ENCODE measurements at regions of chr6 and their contacts with region 1.

Region 1: DNA sequence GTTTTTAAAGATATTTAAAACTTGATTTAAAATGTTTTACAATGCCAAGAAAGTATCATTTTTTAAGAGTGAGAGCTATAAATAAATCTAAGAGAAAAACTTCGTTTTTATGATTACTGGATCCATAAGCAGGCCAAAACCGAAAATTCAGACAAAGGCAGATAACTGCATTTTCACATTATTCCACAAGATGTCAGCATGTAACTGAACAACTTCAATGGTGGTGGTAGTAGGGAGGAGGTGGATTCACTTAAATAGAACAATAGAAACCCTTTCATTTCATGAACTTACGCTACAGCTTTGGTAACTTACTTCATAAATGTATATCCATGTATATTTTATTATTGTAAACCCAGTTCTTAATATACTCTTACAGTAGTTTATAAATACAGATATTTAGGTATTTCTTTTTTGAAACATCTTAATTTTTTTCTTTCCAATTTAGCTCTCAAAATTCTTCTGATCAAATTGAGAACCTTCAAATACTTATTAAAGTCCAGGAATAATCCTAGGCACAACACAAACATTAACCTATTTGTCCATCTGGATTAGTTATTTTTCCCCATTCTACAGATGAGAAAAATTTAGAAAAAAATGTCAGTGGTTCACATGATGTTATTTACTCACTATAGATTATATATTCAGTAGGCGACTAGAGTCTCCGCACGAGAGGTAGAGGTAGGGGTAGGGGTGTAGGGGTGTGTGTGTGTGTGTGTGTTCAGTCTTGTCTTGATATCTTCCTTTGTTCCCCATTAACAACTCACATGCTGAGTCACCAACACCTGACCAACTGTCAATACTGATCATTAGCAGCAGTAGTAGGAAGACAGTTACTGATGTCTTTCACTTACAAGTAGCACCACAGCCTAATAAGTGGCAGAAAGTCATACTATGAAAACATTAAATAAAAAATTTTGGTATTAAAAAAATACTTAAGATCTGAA is 111.5 kb downstream of the ARHGAP18 start:
- DNase-seq: peak; percentile 88

Region 2: DNA sequence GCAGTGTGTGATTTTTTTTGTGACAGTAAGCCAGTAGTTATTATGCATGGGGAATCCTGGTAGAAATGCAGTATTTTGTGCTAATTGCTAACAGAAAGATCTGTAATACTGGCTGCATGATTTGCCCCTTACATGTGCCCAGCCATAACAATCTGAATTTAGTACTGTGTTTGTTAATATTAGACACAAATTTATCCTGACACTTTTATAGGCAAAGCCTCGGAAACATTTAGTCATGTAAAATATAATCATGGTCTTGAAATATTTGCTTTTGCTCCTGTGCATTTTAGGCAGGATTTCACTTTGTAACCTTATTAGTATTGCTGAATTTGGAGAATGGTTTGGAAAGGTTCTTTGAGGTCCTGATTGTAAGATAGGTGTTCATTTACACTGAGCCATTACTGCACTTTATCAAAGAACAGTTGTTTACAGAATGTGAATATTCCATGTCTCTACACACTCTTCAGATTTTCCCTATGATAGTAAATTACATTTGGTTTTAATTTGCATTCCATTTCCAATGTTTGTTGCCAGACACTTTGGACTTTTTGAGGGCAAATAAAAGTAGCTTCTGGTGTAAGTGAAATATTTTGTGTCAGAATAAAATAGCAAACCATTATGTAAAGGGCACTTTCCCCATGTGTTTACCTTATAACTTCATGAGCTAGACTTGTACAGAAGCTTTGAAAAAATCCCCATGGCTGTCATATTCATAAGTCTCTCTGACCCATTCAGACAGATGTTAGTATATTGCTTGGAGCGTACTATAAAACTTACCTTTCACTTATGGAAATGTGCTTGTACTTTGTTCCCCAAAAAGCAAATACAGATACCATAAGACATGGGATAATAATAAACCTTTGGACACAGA is 238.5 kb before region 1 on chr6:
- in situ Hi-C with region 1: no loop called
- DNase-seq: no peak

Region 3: DNA sequence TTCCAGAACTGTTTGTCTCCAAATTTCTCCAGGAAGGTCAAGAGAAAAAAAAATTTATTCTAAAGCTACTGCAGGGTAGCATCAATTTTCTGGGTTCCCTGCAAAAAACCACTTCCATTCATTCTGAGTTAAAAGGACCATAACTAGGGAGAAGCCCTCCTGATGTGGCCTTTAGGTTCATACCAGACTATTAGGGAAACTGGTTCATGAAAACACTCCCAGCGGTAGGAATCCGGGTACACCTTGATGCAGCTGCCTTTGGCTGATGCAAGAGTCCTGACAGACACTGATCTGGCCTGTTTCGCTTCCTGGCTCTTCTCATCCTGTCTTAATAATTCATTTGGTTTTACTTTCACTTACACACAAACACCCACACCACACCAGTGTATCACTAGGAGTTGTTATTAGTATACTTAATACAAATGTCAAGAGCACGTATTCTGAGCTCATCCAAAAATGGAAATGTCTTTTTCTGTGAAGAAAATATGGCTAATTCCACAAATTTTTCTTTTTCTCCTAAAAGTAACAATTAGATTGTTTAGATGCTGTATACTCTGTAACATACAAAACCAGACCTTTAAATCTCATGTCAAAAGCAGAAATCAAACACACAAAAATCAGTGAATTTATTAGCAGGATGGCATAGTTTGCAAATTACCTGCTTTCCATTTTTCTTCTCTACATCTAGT is 149.8 kb after region 1 on chr6:
- in situ Hi-C with region 1: loop called (anchors 10 kb)
- DNase-seq: no peak

Region 4: DNA sequence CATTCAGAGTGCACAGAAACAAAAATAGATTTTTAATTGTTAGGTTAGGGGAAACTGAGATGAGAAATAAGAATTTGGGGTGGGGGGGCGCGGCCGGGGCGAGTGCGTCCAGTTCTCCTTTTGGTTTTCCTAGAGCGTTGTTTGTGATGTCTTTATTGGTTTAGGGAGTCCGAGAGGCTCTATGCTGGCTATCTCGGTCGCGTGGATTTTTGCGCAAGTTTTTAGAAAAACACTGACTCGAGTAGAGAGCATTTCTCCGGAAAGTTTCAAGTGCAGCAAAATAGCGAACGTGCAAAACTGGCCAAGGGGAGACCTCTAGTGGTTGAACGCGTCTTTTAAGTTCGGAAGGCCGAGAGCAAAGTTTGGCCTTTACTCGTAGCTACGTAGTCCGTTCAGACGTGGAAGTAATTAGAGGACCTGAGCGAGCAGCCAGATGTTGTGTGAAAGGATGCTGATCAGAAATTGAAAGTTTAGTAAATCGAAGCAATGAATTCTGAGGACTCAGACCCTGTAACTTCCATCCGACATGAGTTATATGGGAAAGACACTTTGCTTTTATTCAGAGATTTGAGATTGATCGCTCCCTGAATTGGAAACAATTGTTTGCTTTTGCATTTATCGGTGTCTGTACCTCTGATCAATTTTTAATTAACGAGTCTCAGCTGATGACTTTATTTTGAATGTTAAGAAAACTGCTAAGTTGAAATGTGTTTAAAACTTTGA is 422.6 kb after region 1 on chr6:
- in situ Hi-C with region 1: loop called (anchors 25 kb)
- DNase-seq: peak; percentile 87